GM10248 (cell line): ENCODE measurements at regions of chr2 and their contacts with region 1.

Region 1: GRCh38 chr2:235746257-235747084 is 252.6 kb downstream of the AGAP1 start:
- DNase-seq: peak; percentile 73
- CTCF ChIP-seq: peak; percentile 89

Region 2: DNA sequence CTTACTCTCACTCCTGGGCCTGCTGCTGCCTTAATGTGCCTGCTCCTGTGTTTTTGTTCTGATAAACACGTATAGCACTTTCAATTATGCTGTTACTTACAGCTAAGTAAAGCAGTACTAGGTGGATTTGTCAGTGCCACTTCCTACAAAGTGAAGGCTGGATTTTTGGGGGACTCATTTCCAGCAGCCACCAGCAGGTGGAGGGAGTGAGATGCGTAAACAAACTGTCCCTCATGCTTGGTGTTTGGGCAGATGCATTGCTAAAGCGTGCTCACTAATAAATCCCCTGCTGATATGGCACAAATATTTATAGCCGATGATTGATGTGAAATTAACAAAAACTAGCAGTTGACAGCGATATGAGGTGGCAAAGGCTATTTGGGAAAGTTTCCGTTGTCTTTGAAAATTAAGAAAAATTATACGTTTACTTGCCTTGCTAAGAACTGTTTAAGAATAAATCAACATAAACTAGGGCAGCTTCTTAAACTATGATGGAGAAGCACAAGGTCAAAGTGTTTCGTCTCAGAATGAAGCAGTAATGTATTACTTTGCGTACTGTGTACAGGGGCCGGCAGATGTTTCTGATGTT is 151.0 kb before region 1 on chr2:
- CTCF ChIA-PET with region 1: interaction called, 76 read pairs
- POLR2A ChIA-PET with region 1: no interaction called
- DNase-seq: peak; percentile 64
- CTCF ChIP-seq: peak; percentile 73

Region 3: GRCh38 chr2:235698028-235698427 is 48.4 kb before region 1 on chr2:
- CTCF ChIA-PET with region 1: no interaction called
- POLR2A ChIA-PET with region 1: no interaction called
- DNase-seq: no peak
- CTCF ChIP-seq: no peak

Region 4: GRCh38 chr2:235734688-235735231 is 11.7 kb before region 1 on chr2:
- CTCF ChIA-PET with region 1: interaction called, 18 read pairs
- POLR2A ChIA-PET with region 1: no interaction called
- DNase-seq: no peak
- CTCF ChIP-seq: no peak